ENCODE measurements at regions of chr17 and their contacts with region 1.

Region 1: DNA sequence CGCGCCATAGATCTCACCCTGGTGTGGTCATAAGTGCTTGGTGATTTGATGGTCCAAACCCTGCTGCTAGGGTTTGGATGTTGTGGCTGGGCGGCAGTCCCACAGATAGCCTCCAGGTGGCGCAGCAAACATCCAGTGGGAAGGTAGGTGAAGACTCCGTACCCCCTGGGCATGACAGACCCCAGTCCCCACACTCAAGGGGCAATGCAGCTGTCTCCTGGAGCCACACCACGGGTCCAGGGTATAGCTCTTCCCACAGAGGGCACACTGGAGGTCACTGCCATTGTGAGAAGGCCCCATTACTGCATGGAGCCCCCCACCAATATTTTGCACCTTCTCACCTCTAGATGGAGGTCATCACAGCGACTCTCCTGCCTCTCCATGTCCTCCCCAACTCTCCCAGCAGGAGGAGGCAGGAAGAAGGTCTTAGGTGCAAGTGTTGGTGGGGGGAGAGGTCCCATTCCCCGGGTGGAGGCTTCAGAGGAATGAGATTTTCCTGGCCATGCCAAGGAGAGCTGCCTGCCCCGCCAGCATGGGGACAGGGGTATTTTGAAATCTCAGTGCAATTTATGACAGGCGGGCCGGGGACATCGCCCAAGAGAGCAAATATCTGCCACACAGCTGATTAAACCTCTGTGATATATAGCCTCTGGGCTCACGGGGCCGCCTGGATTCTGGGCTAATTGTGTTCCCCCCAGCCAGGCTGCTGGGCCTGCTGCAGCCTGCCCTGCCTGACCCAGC is 17.1 kb upstream of the C17orf113 start:
- DNase-seq: peak; percentile 72
- H3K4me3 ChIP-seq: no peak overlapping the region
- H3K27ac ChIP-seq: no peak overlapping the region
- H3K4me1 ChIP-seq: peaks cover 23% of the 10 kb centered on the region
- CTCF ChIP-seq: peak; percentile 99

Region 2: GRCh38 chr17:41972571-41973411 is 94.7 kb before region 1 on chr17:
- CTCF ChIA-PET with region 1: no interaction called
- POLR2A ChIA-PET with region 1: no interaction called
- intact Hi-C with region 1: no loop called
- DNase-seq: no peak
- H3K4me3 ChIP-seq: no peak overlapping the region
- H3K27ac ChIP-seq: no peak overlapping the region
- H3K4me1 ChIP-seq: peaks cover 1% of the 10 kb centered on the region
- CTCF ChIP-seq: no peak

Region 3: DNA sequence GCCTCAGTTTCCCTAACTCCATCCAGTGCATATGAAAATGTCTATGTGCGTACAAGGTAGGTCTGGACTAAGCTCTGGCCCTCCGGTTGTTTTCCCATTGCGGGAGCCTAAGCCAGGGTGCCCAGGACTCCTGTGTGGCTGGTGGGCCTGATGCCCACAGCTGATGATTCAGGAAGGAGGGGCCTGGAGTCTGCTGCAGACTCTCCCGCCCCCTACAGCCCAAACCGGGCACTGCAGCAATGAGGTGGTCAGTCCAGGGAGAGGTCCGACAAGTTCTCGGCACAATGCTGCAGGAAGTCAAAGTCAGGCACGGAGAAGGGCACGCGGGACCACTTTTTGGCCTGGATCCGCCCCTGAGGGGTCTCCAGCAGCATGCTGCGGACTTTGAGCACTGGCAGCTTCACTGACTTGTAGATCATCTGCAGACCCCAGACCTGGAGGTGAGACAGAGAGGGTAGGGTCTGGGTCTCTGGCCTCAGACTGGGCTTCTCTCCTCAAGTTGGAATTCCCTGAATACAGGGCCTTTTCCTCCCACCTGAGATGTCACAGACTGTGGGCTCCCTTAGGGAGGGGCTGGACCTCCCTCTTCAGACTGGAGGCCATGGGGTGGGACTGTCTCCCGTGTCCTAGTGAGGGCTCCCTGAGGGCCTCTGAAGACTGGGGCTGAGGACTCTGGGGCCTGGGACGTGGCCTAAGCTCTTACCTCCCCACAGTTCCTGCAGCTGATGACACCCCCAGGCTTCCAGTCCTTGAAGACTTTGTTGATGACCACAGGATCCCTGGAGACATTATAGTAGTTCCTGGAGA is 34.2 kb after region 1 on chr17:
- CTCF ChIA-PET with region 1: no interaction called
- POLR2A ChIA-PET with region 1: no interaction called
- intact Hi-C with region 1: loop called (anchors 5 kb)
- DNase-seq: peak; percentile 68
- H3K4me3 ChIP-seq: no peak overlapping the region
- H3K27ac ChIP-seq: no peak overlapping the region
- H3K4me1 ChIP-seq: peaks cover 14% of the 10 kb centered on the region
- CTCF ChIP-seq: peak; percentile 98